ENCODE measurements at regions of chr3 and their contacts with region 1.

Region 1: GRCh38 chr3:63975723-63976122 is 47.6 kb downstream of the PSMD6 start:
- DNase-seq: no peak
- ATAC-seq: no peak
- H3K4me3 Mint-ChIP-seq: no peak overlapping the region
- H3K27ac Mint-ChIP-seq: peak overlapping the region; percentile 4
- H3K4me1 Mint-ChIP-seq: peaks cover 84% of the 10 kb centered on the region
- H3K27me3 Mint-ChIP-seq: no peaks in the 10 kb centered on the region

Region 2: DNA sequence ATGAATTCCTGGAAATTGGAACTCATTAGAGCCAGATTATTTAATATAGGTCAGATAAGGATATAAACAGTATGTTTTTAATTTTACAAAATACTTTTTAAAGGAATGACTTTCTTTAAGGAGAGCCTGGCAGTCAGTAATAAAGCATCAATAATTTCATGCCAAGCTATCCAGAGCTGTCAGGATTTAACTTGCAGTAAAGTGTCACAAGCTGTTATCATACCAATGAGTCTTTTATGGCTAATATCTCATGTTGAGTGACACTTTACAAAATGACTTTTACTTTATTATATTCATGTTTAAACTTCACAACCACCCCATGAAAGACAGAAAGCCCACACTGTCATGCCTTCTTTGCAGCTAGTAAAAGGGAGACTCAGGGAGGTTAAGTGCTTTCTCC is 229.5 kb before region 1 on chr3:
- CTCF ChIA-PET with region 1: no interaction called
- POLR2A ChIA-PET with region 1: no interaction called
- DNase-seq: no peak
- ATAC-seq: no peak
- H3K4me3 Mint-ChIP-seq: no peak overlapping the region
- H3K27ac Mint-ChIP-seq: no peak overlapping the region
- H3K4me1 Mint-ChIP-seq: no peaks in the 10 kb centered on the region
- H3K27me3 Mint-ChIP-seq: no peaks in the 10 kb centered on the region

Region 3: DNA sequence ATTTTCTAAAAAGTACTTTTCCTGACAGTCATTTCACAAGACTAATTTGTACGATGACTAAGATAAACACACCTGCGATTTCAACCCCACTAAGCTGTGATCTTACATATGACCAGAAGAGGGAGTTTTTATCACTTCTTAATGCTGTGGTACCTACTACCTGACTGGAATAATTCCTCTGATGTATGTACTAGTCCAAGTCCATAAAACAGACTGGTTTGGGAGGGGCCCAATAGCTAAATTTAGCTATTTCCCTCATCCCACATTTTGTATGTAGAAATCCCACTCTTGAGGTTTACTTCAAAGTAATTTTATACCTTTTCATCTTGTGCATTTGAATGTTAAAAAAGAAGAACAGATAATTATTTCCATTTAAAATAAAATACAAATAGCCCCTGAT is 13.8 kb before region 1 on chr3:
- CTCF ChIA-PET with region 1: interaction called, 220 read pairs
- POLR2A ChIA-PET with region 1: interaction called, 55 read pairs
- DNase-seq: no peak
- ATAC-seq: peak; percentile 87
- H3K4me3 Mint-ChIP-seq: no peak overlapping the region
- H3K27ac Mint-ChIP-seq: no peak overlapping the region
- H3K4me1 Mint-ChIP-seq: peaks cover 47% of the 10 kb centered on the region
- H3K27me3 Mint-ChIP-seq: no peaks in the 10 kb centered on the region

Measured in activated CD8-positive, alpha-beta T cell treated with anti-CD3 and anti-CD28 coated beads, Interleukin-2, amount 10 ng/mL, durations not matched to agents 7 days and 5 days (primary cell).